Activated CD4-positive, alpha-beta T cell treated with anti-CD3 and anti-CD28 coated beads, Interleukin-2, amount 10 ng/mL, durations not matched to agents 24 days and 14 days (primary cell): ENCODE measurements at regions of chr2 and their contacts with region 1.

Region 1: GRCh38 chr2:39059366-39059952 is 61.4 kb downstream of the SOS1 start:
- DNase-seq: peak; percentile 55
- H3K4me3 Mint-ChIP-seq: no peak overlapping the region
- H3K27ac Mint-ChIP-seq: peak overlapping the region; percentile 22
- H3K4me1 Mint-ChIP-seq: peaks cover 13% of the 10 kb centered on the region
- H3K27me3 Mint-ChIP-seq: no peaks in the 10 kb centered on the region

Region 2: GRCh38 chr2:38947240-38948239 is 111.9 kb before region 1 on chr2:
- intact Hi-C with region 1: loop called (anchors 5 kb)
- DNase-seq: peak; percentile 91
- H3K4me3 Mint-ChIP-seq: no peak overlapping the region
- H3K27ac Mint-ChIP-seq: no peak overlapping the region
- H3K4me1 Mint-ChIP-seq: peaks cover 6% of the 10 kb centered on the region
- H3K27me3 Mint-ChIP-seq: peaks cover 13% of the 10 kb centered on the region

Region 3: GRCh38 chr2:39091063-39091462 is 31.6 kb after region 1 on chr2:
- intact Hi-C with region 1: no loop called
- DNase-seq: no peak
- H3K4me3 Mint-ChIP-seq: no peak overlapping the region
- H3K27ac Mint-ChIP-seq: no peak overlapping the region
- H3K4me1 Mint-ChIP-seq: peaks cover 44% of the 10 kb centered on the region
- H3K27me3 Mint-ChIP-seq: no peaks in the 10 kb centered on the region

Region 4: DNA sequence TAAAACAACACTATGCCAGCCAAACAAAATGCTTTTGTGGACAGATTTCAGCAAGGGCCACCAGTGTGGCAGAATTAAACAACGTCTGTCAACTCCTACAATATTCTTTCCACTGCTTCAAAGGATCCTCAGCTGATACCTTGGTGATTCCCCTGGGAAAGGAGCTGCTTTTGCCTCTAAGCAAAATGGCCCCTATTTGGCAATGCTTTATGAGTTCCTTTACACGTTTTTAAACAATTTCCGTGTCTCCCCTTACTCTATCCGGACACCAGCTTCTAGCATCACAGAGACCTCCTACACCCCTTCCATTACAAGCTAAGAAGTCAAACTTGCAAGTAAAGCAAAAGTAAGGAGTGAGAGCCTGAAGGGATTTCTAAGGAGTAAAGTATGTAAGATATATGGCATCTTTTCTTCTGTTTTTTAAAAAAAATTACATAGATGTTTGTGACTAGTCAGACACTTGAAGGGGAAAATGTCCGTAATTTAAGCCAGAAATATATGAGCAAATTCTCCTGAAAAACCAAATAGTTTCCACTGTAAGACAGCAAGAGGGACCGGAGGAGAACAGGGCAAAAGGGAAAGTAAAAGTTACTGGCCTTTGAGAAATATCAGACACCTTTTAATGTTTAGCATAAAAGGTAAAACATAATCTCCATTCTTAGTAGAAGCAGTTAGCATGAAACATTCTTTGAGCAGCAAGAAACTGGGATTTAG is 59.5 kb after region 1 on chr2:
- intact Hi-C with region 1: loop called (anchors 1 kb)
- DNase-seq: no peak
- H3K4me3 Mint-ChIP-seq: peak overlapping the region; percentile 96
- H3K27ac Mint-ChIP-seq: peak overlapping the region; percentile 95
- H3K4me1 Mint-ChIP-seq: peaks cover 53% of the 10 kb centered on the region
- H3K27me3 Mint-ChIP-seq: no peaks in the 10 kb centered on the region

Region 5: GRCh38 chr2:39194686-39195085 is 135.2 kb after region 1 on chr2:
- intact Hi-C with region 1: no loop called
- DNase-seq: no peak
- H3K4me3 Mint-ChIP-seq: no peak overlapping the region
- H3K27ac Mint-ChIP-seq: no peak overlapping the region
- H3K4me1 Mint-ChIP-seq: peaks cover 4% of the 10 kb centered on the region
- H3K27me3 Mint-ChIP-seq: peaks cover 4% of the 10 kb centered on the region